A673 (cell line): ENCODE measurements at regions of chr3 and their contacts with region 1.

Region 1: DNA sequence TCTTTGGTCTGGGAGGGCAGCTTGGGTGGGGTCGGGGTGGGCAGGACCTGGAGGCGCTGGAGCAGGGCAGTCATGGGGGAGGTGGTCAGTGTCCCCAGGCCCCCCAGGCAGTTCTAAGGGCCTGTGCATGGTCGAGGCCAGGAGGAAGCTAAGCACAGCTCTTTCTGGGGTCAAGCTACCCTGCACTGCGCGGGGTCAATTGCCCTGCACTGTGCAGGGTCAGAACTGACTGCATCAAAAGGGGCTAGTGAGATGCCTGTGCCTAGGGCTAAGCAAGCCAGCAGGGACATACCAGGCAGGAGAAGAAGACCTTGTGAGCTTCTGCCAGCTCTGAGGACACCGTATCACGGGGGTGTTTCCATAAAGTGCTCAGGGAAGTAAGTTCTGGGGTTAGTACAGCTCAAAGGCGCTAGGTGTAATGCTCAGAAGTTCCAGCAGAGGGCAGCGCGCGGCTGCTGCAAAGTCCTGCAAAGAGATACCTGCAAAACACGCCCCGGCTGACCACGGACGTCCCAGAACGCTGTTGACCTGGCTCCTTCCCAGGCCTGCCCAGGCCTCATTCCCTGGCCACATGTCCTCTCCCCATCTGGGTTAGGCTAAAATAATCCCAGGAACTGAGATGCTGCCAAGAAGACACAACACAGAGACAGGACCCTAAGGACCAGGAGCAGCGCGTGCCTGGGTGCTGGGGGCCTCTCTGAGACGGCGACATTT is 18.8 kb upstream of the IQSEC1 start:
- DNase-seq: peak; percentile 57
- H3K4me3 ChIP-seq: no peak overlapping the region
- H3K27ac ChIP-seq: no peak overlapping the region
- H3K4me1 ChIP-seq: no peaks in the 10 kb centered on the region
- H3K27me3 ChIP-seq: no peaks in the 10 kb centered on the region
- CTCF ChIP-seq: peak; percentile 87

Region 2: GRCh38 chr3:13301286-13301987 is 209.4 kb after region 1 on chr3:
- CTCF ChIA-PET with region 1: no interaction called
- POLR2A ChIA-PET with region 1: no interaction called
- intact Hi-C with region 1: no loop called
- DNase-seq: peak; percentile 63
- H3K4me3 ChIP-seq: no peak overlapping the region
- H3K27ac ChIP-seq: no peak overlapping the region
- H3K4me1 ChIP-seq: no peaks in the 10 kb centered on the region
- H3K27me3 ChIP-seq: no peaks in the 10 kb centered on the region
- CTCF ChIP-seq: no peak

Region 3: DNA sequence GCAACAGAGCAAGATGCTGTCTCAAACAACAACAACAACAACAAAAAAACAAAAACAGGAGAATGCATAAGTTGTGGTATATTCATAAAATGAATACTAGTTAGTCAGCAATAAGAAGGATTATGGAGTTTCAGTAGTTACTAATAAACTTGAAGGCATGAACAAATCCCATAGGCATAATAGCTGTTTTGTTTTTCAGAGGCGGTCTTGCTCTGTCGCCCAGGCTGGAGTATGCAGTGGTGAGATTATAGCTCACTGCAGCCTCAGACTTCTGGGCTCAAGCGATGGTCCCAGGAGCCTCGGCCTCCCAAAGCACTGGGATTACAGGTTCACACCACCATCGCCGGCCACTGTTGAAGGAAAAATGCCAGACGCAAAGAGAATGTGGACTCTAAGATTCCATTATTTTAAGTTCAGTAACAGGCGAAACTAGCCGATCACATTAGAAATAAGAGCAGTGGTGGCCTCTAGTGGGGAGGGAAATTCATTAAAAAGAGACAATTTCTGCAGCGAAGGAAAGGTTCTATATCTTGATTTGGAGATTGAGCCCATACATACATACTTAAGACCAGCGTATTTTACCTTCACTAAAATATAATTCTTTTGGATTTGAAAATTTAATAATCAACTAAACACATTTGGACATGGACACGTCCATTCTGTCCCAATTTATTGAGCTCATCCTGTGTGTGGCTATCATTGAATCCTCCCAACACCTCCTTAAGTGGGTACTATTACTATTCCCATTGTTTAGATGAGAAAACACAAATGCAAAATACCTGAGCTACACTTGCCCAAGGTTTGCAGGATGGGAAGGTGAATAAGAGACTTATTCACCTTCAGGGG is 360.7 kb after region 1 on chr3:
- CTCF ChIA-PET with region 1: interaction called, 23 read pairs
- POLR2A ChIA-PET with region 1: interaction called, 5 read pairs
- intact Hi-C with region 1: loop called (anchors 2 kb)
- DNase-seq: peak; percentile 73
- H3K4me3 ChIP-seq: peak overlapping the region; percentile 15
- H3K27ac ChIP-seq: no peak overlapping the region
- H3K4me1 ChIP-seq: no peaks in the 10 kb centered on the region
- H3K27me3 ChIP-seq: no peaks in the 10 kb centered on the region
- CTCF ChIP-seq: peak; percentile 68

Region 4: GRCh38 chr3:13461169-13462158 is 369.4 kb after region 1 on chr3:
- CTCF ChIA-PET with region 1: no interaction called
- POLR2A ChIA-PET with region 1: no interaction called
- intact Hi-C with region 1: loop called (anchors 1 kb)
- DNase-seq: peak; percentile 76
- H3K4me3 ChIP-seq: no peak overlapping the region
- H3K27ac ChIP-seq: no peak overlapping the region
- H3K4me1 ChIP-seq: no peaks in the 10 kb centered on the region
- H3K27me3 ChIP-seq: no peaks in the 10 kb centered on the region
- CTCF ChIP-seq: peak; percentile 95

Region 5: DNA sequence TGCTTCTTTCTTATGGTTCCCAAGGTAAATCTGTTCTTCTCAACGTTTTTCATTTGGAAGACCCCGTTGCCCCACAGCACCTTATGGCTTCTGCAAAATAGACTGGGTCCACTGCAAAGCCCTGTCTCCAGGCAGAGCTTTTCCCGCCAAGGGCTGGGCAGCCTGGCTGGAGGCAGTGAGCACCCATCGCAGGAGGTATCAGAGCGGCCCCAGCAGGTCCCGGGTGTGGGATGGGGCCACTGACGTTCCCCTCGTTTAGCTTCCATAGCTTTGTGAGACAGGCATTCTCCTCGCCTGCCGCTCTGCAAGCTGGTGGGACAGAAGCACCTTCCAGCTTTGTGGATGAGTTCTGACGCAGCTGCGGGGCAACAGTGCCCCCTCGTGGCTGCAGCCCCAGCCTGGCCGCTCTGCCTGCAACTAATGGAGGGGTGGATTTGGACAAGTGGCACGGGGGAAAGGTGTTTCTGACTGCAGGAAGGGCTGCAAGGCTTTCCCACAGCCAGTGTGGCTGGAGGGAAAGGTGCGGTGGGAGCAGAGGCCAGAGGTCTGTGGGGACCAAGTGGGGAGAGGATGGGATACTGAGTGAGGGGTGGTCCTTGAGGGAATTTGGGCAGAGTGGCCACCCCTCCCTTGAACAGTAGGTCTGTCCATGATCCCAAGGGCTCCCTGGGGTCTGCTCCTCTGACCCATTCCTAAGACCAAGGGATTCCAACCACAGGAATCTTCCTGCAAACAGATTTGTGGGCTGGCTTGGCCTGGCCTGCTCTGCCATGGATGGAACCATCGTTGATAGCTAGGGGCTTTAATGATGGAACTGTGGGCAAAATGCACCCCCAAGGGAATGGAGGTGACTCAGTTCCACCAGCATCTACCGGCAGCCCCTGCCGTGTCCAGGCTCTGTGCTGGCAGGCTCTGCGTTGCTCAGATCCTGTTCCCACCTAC is 556.3 kb after region 1 on chr3:
- CTCF ChIA-PET with region 1: no interaction called
- POLR2A ChIA-PET with region 1: no interaction called
- intact Hi-C with region 1: loop called (anchors 2 kb)
- DNase-seq: peak; percentile 82
- H3K4me3 ChIP-seq: no peak overlapping the region
- H3K27ac ChIP-seq: no peak overlapping the region
- H3K4me1 ChIP-seq: peaks cover 7% of the 10 kb centered on the region
- H3K27me3 ChIP-seq: no peaks in the 10 kb centered on the region
- CTCF ChIP-seq: peak; percentile 98